ENCODE measurements at regions of chr19 and their contacts with region 1.

Region 1: GRCh38 chr19:50537762-50538230 is 24.1 kb upstream of the ASPDH start:
- H3K4me3 ChIP-seq: no peak overlapping the region
- H3K27ac ChIP-seq: no peak overlapping the region
- H3K4me1 ChIP-seq: no peaks in the 10 kb centered on the region
- CTCF ChIP-seq: peak; percentile 91

Region 2: DNA sequence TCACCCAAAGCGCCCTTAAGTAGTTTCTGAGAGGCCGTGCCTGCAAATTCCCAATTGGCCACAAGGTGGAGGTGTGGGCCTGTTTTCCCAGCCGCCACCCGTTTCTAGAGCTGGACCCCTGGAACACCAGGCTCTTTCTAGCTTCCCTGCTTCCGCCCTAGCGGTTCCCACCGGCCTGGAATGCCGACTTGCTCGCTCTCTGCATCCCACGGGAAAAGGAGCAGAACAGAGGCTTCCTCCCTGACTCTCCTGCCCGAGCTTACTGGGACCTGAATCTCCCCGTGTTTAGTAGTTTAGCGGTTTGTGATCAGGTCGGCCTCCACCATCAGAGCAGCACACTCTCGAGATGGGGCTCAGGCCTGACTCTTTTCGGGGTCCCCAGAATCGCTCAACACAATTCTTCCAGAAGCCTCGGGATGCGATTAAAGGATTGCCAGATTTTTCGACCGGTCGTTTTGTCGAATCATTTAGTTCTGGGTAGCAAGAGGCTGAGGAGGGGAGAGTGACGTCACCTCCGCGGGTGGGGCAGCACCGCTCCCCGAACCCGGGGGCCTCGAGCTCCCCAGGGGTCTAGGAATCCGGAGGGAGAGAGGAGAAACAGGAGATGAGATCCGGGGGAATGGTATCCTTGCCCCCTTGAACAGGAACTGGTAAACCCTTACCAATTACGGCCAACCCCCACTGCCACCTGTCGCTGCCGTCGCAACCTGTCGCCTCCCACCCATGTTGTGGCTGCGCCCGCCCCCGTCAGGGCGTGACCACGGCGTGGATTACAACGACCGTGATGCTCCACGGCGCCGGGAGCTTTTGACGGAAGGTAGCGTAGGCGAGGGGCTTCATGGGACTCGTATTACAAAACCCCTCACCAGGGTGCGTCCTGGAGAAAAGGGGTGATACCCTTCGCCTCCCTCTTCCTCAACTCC is 180.4 kb before region 1 on chr19:
- CTCF ChIA-PET with region 1: interaction called, 14 read pairs
- POLR2A ChIA-PET with region 1: no interaction called
- H3K4me3 ChIP-seq: peak overlapping the region; percentile 32
- H3K27ac ChIP-seq: no peak overlapping the region
- H3K4me1 ChIP-seq: no peaks in the 10 kb centered on the region
- CTCF ChIP-seq: peak; percentile 73

Region 3: DNA sequence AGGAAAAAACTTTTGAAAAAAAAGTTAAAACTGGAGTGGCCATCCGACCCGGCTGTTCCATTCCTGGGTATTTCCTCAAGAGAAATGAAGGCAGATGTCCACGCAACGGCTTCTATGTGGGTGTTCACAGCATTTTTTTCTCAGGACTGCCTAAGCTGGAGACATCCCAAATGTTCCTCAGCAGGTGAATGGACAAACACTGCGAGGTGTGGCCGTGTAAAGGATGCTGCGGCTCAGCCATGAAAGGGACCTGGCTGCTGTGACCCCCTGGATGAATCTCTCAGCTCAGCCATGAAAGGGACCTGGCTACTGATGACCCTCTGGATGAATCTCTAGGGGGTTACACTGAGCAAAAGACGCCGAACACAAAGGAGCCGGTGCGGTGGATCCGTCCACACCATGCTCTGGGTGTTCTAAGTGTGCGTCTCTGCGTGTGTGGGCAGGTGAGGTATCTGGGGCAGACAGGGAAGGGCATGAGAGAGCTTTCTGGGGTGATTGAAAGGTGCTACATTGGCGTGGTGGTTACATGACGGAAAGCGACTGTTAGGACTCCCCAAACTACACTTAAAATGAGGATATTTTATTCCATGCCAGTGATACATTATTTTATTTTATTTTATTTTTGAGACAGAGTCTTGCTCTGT is 16.9 kb before region 1 on chr19:
- CTCF ChIA-PET with region 1: interaction called, 76 read pairs
- POLR2A ChIA-PET with region 1: no interaction called
- H3K4me3 ChIP-seq: no peak overlapping the region
- H3K27ac ChIP-seq: no peak overlapping the region
- H3K4me1 ChIP-seq: no peaks in the 10 kb centered on the region
- CTCF ChIP-seq: no peak

Region 4: GRCh38 chr19:50573741-50574461 is 36.1 kb after region 1 on chr19:
- CTCF ChIA-PET with region 1: interaction called, 14 read pairs
- POLR2A ChIA-PET with region 1: no interaction called
- H3K4me3 ChIP-seq: no peak overlapping the region
- H3K27ac ChIP-seq: no peak overlapping the region
- H3K4me1 ChIP-seq: no peaks in the 10 kb centered on the region
- CTCF ChIP-seq: no peak

Region 5: GRCh38 chr19:50669302-50670101 is 131.7 kb after region 1 on chr19:
- CTCF ChIA-PET with region 1: interaction called, 16 read pairs
- POLR2A ChIA-PET with region 1: no interaction called
- H3K4me3 ChIP-seq: no peak overlapping the region
- H3K27ac ChIP-seq: no peak overlapping the region
- H3K4me1 ChIP-seq: no peaks in the 10 kb centered on the region
- CTCF ChIP-seq: peak; percentile 64

Region 6: GRCh38 chr19:50705422-50706019 is 167.7 kb after region 1 on chr19:
- CTCF ChIA-PET with region 1: interaction called, 13 read pairs
- POLR2A ChIA-PET with region 1: no interaction called
- H3K4me3 ChIP-seq: no peak overlapping the region
- H3K27ac ChIP-seq: no peak overlapping the region
- H3K4me1 ChIP-seq: no peaks in the 10 kb centered on the region
- CTCF ChIP-seq: peak; percentile 49; the same call in 1 of the 2 replicates

Region 7: GRCh38 chr19:50777754-50778303 is 240.0 kb after region 1 on chr19:
- CTCF ChIA-PET with region 1: interaction called, 86 read pairs
- POLR2A ChIA-PET with region 1: no interaction called
- H3K4me3 ChIP-seq: peak overlapping the region; percentile 16
- H3K27ac ChIP-seq: no peak overlapping the region
- H3K4me1 ChIP-seq: 0 out of 2 replicates have a peak, but pooled peaks cover 2% of the 10 kb centered on the region
- CTCF ChIP-seq: no peak